HCT116 (cell line): ENCODE measurements at regions of chr12 and their contacts with region 1.

Region 1: DNA sequence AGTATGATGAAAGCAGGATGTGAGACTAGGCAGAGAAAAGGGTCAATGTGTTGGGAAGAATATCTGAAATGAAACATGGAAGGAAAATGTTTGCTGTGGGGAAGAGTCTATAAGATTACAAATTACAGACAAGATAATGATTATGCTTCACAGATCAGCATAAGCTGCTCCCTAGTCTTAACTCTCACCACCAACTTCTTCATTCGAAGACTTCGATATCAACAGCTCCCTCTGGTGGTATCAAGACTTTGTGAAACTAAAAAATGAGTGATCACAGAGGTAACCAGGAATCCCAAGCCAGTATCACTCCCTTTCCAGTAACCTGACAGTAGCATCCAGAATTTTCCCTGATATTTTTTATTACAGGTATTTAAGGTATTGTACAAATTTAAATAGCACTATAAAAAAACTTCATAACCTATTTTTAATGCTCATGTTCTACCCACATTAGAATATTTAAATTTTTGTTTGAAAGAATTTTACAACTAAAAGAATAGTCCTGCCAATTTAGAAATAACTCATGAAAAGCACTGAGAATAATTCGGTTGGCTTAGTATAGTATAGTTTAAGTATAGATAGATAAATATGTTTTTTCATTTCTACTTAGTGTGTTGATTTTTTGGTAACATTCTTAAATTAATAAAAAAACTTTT is 84.4 kb downstream of the C2CD5 start:
- DNase-seq: peak; percentile 26
- ATAC-seq: peak; percentile 69
- H3K4me3 ChIP-seq: no peak overlapping the region
- H3K27ac ChIP-seq: no peak overlapping the region
- H3K4me1 ChIP-seq: no peaks in the 10 kb centered on the region
- H3K27me3 ChIP-seq: no peaks in the 10 kb centered on the region
- CTCF ChIP-seq: peak; percentile 18 to 68 (median 57); a peak in 5 of 6 replicates
- POLR2A ChIP-seq: no peak
- RAD21 ChIP-seq: peak; percentile 28

Region 2: GRCh38 chr12:22083167-22083566 is 376.8 kb before region 1 on chr12:
- CTCF ChIA-PET with region 1: interaction called, 9 read pairs
- POLR2A ChIA-PET with region 1: no interaction called
- RAD21 ChIA-PET with region 1: no interaction called
- intact Hi-C with region 1: loop called (anchors 1 kb)
- DNase-seq: peak; percentile 12
- ATAC-seq: peak; percentile 44; the same call in 1 of the 2 replicates
- H3K4me3 ChIP-seq: no peak overlapping the region
- H3K27ac ChIP-seq: no peak overlapping the region
- H3K4me1 ChIP-seq: no peaks in the 10 kb centered on the region
- H3K27me3 ChIP-seq: no peaks in the 10 kb centered on the region
- CTCF ChIP-seq: peak; percentile 13 to 59 (median 42); a peak in 4 of 6 replicates
- POLR2A ChIP-seq: no peak
- RAD21 ChIP-seq: peak; percentile 72

Region 3: GRCh38 chr12:22100958-22101748 is 358.8 kb before region 1 on chr12:
- CTCF ChIA-PET with region 1: interaction called, 4 read pairs
- POLR2A ChIA-PET with region 1: no interaction called
- RAD21 ChIA-PET with region 1: no interaction called
- intact Hi-C with region 1: loop called (anchors 5 kb)
- DNase-seq: peak; percentile 18
- ATAC-seq: peak; percentile 76
- H3K4me3 ChIP-seq: no peak overlapping the region
- H3K27ac ChIP-seq: no peak overlapping the region
- H3K4me1 ChIP-seq: no peaks in the 10 kb centered on the region
- H3K27me3 ChIP-seq: no peaks in the 10 kb centered on the region
- CTCF ChIP-seq: peak in 2 of 3 experiments; percentile 57 to 66; a peak in 4 of 6 replicates
- POLR2A ChIP-seq: no peak
- RAD21 ChIP-seq: peak; percentile 60

Region 4: DNA sequence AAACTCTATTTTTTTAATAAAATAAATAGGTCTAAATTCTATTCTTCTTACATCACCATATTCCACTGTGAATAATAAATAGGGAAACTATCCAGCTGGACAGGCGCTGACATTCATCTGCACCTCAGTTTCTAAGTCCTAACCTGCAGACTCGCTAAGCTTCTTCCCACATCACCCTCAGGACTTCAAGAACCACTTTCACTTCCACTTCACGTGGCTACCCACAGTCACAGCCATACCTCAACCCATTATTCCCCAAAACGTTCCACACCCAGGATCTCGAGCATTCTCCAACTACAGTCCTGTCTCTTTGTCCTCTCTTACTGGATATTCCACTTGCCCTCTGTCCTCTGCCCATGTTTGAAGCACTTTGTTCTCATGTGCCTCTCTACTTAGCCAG is 13.2 kb after region 1 on chr12:
- CTCF ChIA-PET with region 1: interaction called, 19 read pairs
- POLR2A ChIA-PET with region 1: no interaction called
- RAD21 ChIA-PET with region 1: no interaction called
- intact Hi-C with region 1: no loop called
- DNase-seq: no peak
- ATAC-seq: no peak
- H3K4me3 ChIP-seq: no peak overlapping the region
- H3K27ac ChIP-seq: no peak overlapping the region
- H3K4me1 ChIP-seq: no peaks in the 10 kb centered on the region
- H3K27me3 ChIP-seq: no peaks in the 10 kb centered on the region
- CTCF ChIP-seq: no peak
- POLR2A ChIP-seq: no peak
- RAD21 ChIP-seq: no peak

Region 5: GRCh38 chr12:22631863-22632463 is 172.0 kb after region 1 on chr12:
- CTCF ChIA-PET with region 1: no interaction called
- POLR2A ChIA-PET with region 1: no interaction called
- RAD21 ChIA-PET with region 1: no interaction called
- intact Hi-C with region 1: loop called (anchors 10 kb)
- DNase-seq: no peak
- ATAC-seq: no peak
- H3K4me3 ChIP-seq: no peak overlapping the region
- H3K27ac ChIP-seq: no peak overlapping the region
- H3K4me1 ChIP-seq: 0 out of 4 replicates have a peak, but pooled peaks cover 0 to 4% of the 10 kb centered on the region in 2 experiments
- H3K27me3 ChIP-seq: no peaks in the 10 kb centered on the region
- CTCF ChIP-seq: peak; percentile 35 to 68 (median 40); a peak in 4 of 6 replicates
- POLR2A ChIP-seq: no peak
- RAD21 ChIP-seq: peak; percentile 50; the same call in 1 of the 2 replicates